MCF 10A (cell line): ENCODE measurements at regions of chr10 and their contacts with region 1.

Region 1: GRCh38 chr10:38010119-38010903 is at the start of gene ZNF33A:
- DNase-seq: peak; percentile 94
- H3K4me3 Mint-ChIP-seq: peak within 1 kb of the TSS; percentile 90
- H3K27ac Mint-ChIP-seq: peak within 1 kb of the TSS; percentile 99
- H3K4me1 Mint-ChIP-seq: no peaks in the 10 kb centered on the region
- H3K27me3 Mint-ChIP-seq: no peaks in the 10 kb centered on the region
- CTCF ChIP-seq: no peak
- total RNA-seq, gene ZNF33A: 20.7 and 23.5 TPM in 2 replicates

Region 2: DNA sequence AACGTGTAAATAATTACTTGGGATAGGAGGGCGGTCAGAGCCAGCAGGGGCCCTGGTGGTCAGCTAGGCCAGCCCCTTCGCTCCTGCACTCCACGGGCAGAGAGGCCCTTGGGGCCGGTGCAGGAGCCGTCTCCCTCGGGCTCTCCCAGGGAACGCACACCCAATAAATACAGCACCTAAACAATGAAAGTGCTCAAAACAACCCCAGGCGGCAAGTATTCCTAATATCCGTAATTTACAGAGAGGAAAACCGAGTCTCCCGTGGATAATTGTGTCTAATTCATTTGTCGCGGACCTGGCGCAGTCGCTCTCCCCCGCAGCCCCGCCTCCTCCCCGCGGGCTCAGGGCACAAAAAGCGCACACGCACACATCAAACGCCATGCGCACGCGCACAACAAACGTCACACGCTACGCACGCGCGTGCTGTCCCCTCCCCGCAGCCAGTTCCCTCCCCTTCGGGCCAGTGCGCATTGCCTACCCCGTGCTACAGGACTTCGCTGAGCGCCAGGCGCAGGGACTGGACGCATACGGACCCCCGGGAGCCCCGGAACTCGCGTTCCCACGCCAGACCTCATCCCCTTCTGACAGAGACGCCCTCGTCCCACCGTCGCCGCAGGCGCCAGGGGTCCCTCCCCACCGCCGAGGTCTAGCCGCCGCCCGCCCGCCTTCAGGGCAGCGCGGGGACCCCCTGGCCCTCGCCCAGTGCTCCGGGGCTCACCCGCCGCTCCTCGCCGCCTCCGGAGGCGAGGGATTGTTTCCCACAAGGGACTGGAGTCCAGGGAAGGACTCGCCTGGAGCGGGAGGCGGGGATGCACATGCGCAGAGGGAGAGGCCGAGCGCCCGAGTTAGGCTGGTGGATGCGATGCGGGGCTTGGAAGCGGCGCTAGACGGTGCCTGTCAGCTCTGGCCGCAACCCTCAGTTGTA is 152.8 kb before region 1 on chr10 and contains the start of gene ZNF248:
- CTCF ChIA-PET with region 1: no interaction called
- POLR2A ChIA-PET with region 1: interaction called, 11 read pairs
- intact Hi-C with region 1: no loop called
- DNase-seq: peak; percentile 95
- H3K4me3 Mint-ChIP-seq: peak within 1 kb of the TSS; percentile 78
- H3K27ac Mint-ChIP-seq: peak within 1 kb of the TSS; percentile 97
- H3K4me1 Mint-ChIP-seq: peaks cover 16% of the 10 kb centered on the region
- H3K27me3 Mint-ChIP-seq: no peaks in the 10 kb centered on the region
- CTCF ChIP-seq: no peak
- total RNA-seq, gene ZNF248: 5.7 and 10.0 TPM in 2 replicates

Region 3: GRCh38 chr10:38054361-38054797 is 44.1 kb after region 1 on chr10:
- CTCF ChIA-PET with region 1: no interaction called
- POLR2A ChIA-PET with region 1: interaction called, 8 read pairs
- intact Hi-C with region 1: loop called (anchors 5 kb)
- DNase-seq: peak; percentile 53
- H3K4me3 Mint-ChIP-seq: peak overlapping the region; percentile 26
- H3K27ac Mint-ChIP-seq: peak overlapping the region; percentile 69
- H3K4me1 Mint-ChIP-seq: peaks cover 14% of the 10 kb centered on the region
- H3K27me3 Mint-ChIP-seq: no peaks in the 10 kb centered on the region
- CTCF ChIP-seq: no peak

Region 4: DNA sequence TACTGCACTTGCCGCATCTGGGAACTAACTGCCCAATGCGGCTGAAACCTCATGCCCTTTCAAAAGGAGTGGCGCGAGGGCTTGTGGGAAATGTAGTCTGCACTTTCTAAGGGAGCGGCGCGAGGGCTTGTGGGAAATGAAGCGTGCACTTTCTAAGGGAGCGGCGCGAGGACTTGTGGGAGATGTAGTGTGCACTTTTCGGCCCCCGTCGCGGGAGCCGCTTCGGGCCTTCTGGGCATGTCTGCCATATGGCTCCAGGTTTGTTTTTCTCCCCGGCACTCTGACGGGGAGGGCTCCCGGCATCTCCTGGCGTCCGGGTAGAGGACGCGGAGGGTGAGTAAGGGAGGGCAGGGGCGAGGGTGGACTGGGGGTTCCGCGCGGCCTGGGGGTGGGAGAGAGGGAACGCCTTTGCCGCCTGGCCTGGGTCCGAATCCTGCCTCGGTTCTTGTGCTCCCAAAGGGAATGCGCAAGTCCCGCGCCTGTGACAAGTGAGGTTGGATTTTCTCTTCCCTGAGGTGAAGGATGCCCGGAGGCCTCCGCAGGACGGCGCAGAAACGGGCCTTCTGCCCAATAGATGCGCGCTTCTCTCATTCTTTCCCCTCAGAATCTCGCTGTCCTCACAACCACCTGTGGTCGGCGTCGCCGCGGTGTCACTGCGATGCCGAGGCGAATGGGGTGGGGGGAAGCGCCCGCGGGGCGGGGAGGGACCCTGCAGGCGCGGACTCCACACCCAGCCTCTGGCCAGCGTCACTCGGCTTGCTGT is 84.0 kb after region 1 on chr10 and contains the start of gene ZNF37A:
- CTCF ChIA-PET with region 1: no interaction called
- POLR2A ChIA-PET with region 1: interaction called, 6 read pairs
- intact Hi-C with region 1: loop called (anchors 1 kb)
- DNase-seq: peak; percentile 98
- H3K4me3 Mint-ChIP-seq: peak within 1 kb of the TSS; percentile 80
- H3K27ac Mint-ChIP-seq: peak within 1 kb of the TSS; percentile 96
- H3K4me1 Mint-ChIP-seq: peaks cover 5% of the 10 kb centered on the region
- H3K27me3 Mint-ChIP-seq: no peaks in the 10 kb centered on the region
- CTCF ChIP-seq: no peak
- total RNA-seq, gene ZNF37A: 44.5 and 52.3 TPM in 2 replicates